ENCODE measurements at regions of chr9 and their contacts with region 1.

Region 1: GRCh38 chr9:28014212-28014611 is 440.9 kb upstream of the C9orf72 start:
- DNase-seq: no peak
- ATAC-seq: no peak
- H3K4me3 ChIP-seq: no peak overlapping the region
- H3K27ac ChIP-seq: no peak overlapping the region
- H3K4me1 ChIP-seq: no peaks in the 10 kb centered on the region
- H3K27me3 ChIP-seq: no peaks in the 10 kb centered on the region
- CTCF ChIP-seq: no peak

Region 2: GRCh38 chr9:27954858-27955257 is 59.4 kb before region 1 on chr9:
- intact Hi-C with region 1: loop called in 1 of 2 experiments (anchors 10 kb)
- DNase-seq: no peak
- ATAC-seq: no peak
- H3K4me3 ChIP-seq: no peak overlapping the region
- H3K27ac ChIP-seq: no peak overlapping the region
- H3K4me1 ChIP-seq: no peaks in the 10 kb centered on the region
- H3K27me3 ChIP-seq: no peaks in the 10 kb centered on the region
- CTCF ChIP-seq: no peak

Measured in left lung (tissue), 14 donors.